ENCODE measurements at regions of chr14 and their contacts with region 1.

Region 1: GRCh38 chr14:93332853-93333630 is at the start of gene BTBD7:
- DNase-seq: peak; percentile 63
- ATAC-seq: peak; percentile 89
- H3K4me3 ChIP-seq: peak within 1 kb of the TSS; percentile 86
- H3K27ac ChIP-seq: peak within 1 kb of the TSS; percentile 78
- H3K4me1 ChIP-seq: peaks cover 8% of the 10 kb centered on the region
- H3K27me3 ChIP-seq: no peaks in the 10 kb centered on the region
- CTCF ChIP-seq: peak in 2 of 3 experiments; percentile 4 to 9; a peak in 1 of 6 replicates
- EP300 ChIP-seq: no peak
- POLR2A ChIP-seq: peak; percentile 90
- RAD21 ChIP-seq: peak; percentile 16; the same call in 1 of the 2 replicates
- polyA plus RNA-seq, gene BTBD7: 3.6 to 6.0 TPM

Region 2: DNA sequence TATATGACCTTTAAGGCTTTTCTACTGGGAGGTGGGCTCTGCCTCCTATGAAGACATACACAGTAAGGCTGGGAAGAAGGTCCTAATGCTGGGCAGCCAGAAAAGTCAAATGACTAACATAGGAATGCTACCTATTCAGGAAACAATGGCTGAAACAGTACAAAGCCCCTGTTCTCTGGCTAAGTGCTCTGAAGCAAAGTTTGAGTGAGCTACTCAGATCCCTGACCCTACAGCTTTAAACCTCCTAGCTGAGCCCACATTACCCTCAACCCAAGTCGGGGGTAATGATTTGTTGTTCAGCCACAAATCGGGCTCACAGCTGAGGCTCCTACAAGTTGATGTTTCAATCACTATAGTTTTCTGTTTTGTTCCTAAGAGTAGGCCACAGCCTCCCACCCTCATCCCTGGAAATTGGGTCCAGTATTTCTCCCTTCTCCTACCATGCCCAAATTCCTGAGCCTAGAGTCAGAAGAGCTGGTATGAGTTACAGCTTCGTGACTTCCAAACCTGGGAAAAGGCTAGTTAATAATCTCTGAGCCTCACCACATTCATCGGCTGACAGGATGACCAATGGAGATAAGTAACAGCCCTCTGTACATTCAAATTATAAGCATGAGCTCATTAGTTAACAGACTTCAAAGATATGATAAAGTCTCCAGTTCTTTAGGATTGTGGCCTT is 46.7 kb before region 1 on chr14:
- CTCF ChIA-PET with region 1: interaction called, 3 read pairs
- POLR2A ChIA-PET with region 1: no interaction called
- RAD21 ChIA-PET with region 1: interaction called, 18 read pairs
- SMC1A ChIA-PET with region 1: interaction called, 13 read pairs
- in situ Hi-C with region 1: no loop called
- intact Hi-C with region 1: no loop called
- DNase-seq: no peak
- ATAC-seq: peak; percentile 14; the same call in 2 of the 3 replicates
- H3K4me3 ChIP-seq: no peak overlapping the region
- H3K27ac ChIP-seq: no peak overlapping the region
- H3K4me1 ChIP-seq: peaks cover 16% of the 10 kb centered on the region
- H3K27me3 ChIP-seq: no peaks in the 10 kb centered on the region
- CTCF ChIP-seq: no peak
- EP300 ChIP-seq: no peak
- POLR2A ChIP-seq: no peak
- RAD21 ChIP-seq: no peak

Region 3: DNA sequence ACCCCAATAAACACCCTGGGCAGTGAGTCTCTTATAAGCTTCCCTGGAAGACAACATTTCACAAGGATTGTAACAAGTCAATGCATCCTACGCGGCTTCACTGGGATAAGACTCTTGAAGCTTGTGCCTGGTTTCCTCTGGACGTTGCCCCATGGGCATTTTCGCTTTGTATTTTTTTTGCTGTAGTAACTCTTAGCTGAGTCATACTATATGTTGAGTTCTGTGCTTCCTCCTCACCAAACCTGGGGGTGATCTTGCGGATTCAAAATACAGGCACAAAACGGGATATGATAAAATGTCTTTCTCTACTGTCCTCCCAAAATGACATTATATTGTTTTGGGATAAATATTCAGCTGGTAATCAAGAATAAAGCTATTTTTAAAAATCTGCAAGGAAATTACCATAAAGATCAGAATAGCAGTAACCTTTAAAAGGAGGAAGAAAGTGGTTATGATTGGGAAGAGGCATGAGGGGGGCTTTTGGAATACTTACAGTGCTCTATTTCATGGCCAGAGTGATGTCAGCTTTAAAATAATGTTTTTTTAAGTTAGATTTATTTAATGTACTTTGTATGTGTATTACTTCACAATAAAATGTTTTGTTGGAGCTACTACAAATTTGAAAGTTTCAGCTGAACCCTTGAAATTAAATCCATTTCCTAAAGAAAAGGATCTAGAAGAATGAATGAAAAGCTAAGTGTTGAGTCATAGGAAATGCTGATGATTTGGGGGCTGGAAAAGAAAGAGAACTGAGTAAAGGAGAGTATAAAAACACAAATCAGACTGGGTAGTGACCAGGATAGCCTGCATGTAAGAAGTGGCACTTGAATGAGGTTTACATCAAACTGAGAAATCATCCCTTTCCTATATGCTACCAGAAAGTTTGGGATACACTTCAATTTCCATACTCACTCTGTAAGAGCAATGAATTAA is 14.9 kb before region 1 on chr14:
- CTCF ChIA-PET with region 1: interaction called, 26 read pairs
- POLR2A ChIA-PET with region 1: interaction called, 11 read pairs
- RAD21 ChIA-PET with region 1: interaction called, 12 read pairs
- SMC1A ChIA-PET with region 1: interaction called, 41 read pairs
- in situ Hi-C with region 1: no loop called
- intact Hi-C with region 1: no loop called
- DNase-seq: no peak
- ATAC-seq: no peak
- H3K4me3 ChIP-seq: no peak overlapping the region
- H3K27ac ChIP-seq: no peak overlapping the region
- H3K4me1 ChIP-seq: peaks cover 21% of the 10 kb centered on the region
- H3K27me3 ChIP-seq: no peaks in the 10 kb centered on the region
- CTCF ChIP-seq: no peak
- EP300 ChIP-seq: no peak
- POLR2A ChIP-seq: no peak
- RAD21 ChIP-seq: no peak

Region 4: GRCh38 chr14:93381644-93382043 is 48.6 kb after region 1 on chr14:
- CTCF ChIA-PET with region 1: interaction called, 6 read pairs
- POLR2A ChIA-PET with region 1: no interaction called
- RAD21 ChIA-PET with region 1: interaction called, 9 read pairs
- SMC1A ChIA-PET with region 1: interaction called, 12 read pairs
- in situ Hi-C with region 1: no loop called
- intact Hi-C with region 1: no loop called
- DNase-seq: no peak
- ATAC-seq: peak; percentile 76
- H3K4me3 ChIP-seq: no peak overlapping the region
- H3K27ac ChIP-seq: no peak overlapping the region
- H3K4me1 ChIP-seq: no peaks in the 10 kb centered on the region
- H3K27me3 ChIP-seq: no peaks in the 10 kb centered on the region
- CTCF ChIP-seq: 0 out of 6 replicates have a peak, but pooled peaks of 1 of the 3 experiments have one; percentile 13
- EP300 ChIP-seq: no peak
- POLR2A ChIP-seq: no peak
- RAD21 ChIP-seq: peak; percentile 54

Region 5: DNA sequence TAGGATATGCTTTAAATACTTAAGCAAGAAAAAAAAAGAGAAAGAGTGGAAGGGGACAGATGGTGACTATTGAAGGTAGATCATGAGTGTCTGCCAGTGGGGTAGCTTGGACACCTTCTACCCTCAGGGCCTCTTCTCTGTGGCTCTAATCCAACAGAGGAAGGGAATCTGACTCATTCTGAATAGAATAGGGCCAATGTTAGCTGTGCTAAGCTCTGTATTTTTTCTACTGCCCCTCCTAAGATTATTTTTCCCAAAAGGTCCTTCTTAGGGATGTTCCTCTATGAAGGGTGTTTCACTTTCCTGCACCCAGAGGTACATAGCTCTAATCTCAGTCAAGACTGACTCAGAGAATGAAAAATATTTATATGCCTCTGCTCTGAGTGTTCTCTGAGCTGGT is 123.3 kb after region 1 on chr14:
- CTCF ChIA-PET with region 1: no interaction called
- POLR2A ChIA-PET with region 1: no interaction called
- RAD21 ChIA-PET with region 1: no interaction called
- SMC1A ChIA-PET with region 1: no interaction called
- in situ Hi-C with region 1: no loop called
- intact Hi-C with region 1: no loop called
- DNase-seq: no peak
- ATAC-seq: no peak
- H3K4me3 ChIP-seq: no peak overlapping the region
- H3K27ac ChIP-seq: no peak overlapping the region
- H3K4me1 ChIP-seq: peaks cover 5% of the 10 kb centered on the region; the same call in 1 of the 2 replicates
- H3K27me3 ChIP-seq: no peaks in the 10 kb centered on the region; a peak in 1 of 4 replicates
- CTCF ChIP-seq: no peak
- EP300 ChIP-seq: no peak
- POLR2A ChIP-seq: no peak
- RAD21 ChIP-seq: no peak

Region 6: DNA sequence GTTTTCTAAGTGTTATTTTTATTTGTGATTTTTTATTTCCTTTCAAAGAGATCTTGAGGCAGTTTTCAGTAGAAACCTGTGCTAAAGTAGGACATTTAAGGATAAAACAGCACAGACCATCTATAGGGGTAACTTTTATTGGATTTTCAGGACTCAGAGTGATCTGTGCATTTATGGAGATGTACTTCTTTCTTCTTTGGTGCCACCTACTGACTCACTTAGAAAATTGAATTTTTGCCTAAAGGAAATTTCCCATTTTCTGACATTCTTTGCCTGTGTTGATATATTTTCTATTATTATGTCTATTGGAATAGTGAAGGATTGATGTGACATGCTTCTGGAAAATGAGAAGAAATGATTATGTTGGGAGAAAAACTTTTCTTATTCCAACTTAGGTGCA is 210.7 kb after region 1 on chr14:
- CTCF ChIA-PET with region 1: interaction called, 5 read pairs
- POLR2A ChIA-PET with region 1: interaction called, 5 read pairs
- RAD21 ChIA-PET with region 1: interaction called, 8 read pairs
- SMC1A ChIA-PET with region 1: interaction called, 7 read pairs
- in situ Hi-C with region 1: no loop called
- intact Hi-C with region 1: loop called (anchors 2 kb)
- DNase-seq: no peak
- ATAC-seq: no peak
- H3K4me3 ChIP-seq: no peak overlapping the region
- H3K27ac ChIP-seq: no peak overlapping the region
- H3K4me1 ChIP-seq: no peaks in the 10 kb centered on the region
- H3K27me3 ChIP-seq: no peaks in the 10 kb centered on the region
- CTCF ChIP-seq: peak; percentile 22 to 53 (median 33); a peak in 4 of 6 replicates
- EP300 ChIP-seq: no peak
- POLR2A ChIP-seq: no peak
- RAD21 ChIP-seq: peak; percentile 55

Measured in GM12878 (cell line).